ENCODE measurements at regions of chr12 and their contacts with region 1.

Region 1: DNA sequence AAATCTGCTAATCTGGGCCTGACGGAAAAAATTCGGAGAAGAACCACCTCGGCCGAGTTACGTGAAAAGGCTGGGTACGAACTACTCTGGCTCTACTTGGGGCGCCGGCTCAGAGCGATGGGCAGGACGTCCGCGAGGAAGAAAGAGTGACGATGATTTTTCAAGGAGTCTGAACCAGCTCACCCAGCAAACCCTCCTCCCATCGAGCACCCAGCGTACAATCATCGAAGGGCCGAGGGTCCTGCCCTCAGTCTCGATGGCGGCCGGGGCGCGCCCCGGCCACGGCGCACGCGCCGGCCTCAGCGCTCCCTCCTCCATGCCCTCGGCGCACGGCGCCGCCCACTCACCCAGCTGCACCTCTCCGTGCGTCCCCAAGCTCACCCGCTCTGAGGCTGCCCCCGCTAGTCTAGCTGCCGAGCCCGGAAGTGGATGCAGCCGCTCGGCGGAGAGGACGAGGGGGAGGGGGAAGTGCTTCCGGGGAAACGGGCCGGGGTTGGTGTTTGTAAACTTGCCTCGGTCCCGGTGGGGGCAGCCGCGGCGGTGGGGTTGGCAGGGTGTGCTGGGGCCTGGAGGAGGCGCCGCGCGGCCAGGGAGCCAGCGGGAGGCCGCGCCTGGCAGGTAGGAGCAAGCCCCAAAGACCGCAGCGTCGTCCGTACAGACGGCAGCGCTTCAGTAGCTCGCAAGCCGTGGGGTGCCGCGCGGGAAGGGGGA is at the starts of genes CSAD and ZNF740:
- DNase-seq: peak; percentile 91
- ATAC-seq: peak; percentile 94
- H3K4me3 Mint-ChIP-seq: peak within 1 kb of the TSS; percentile 93
- H3K27ac Mint-ChIP-seq: peak within 1 kb of the TSS; percentile 98
- H3K4me1 Mint-ChIP-seq: peaks cover 53% of the 10 kb centered on the region
- H3K27me3 Mint-ChIP-seq: no peaks in the 10 kb centered on the region
- CTCF ChIP-seq: no peak
- total RNA-seq, gene CSAD: 25.7 and 34.6 TPM in 2 replicates
- total RNA-seq, gene ZNF740: 64.4 and 67.2 TPM in 2 replicates

Region 2: DNA sequence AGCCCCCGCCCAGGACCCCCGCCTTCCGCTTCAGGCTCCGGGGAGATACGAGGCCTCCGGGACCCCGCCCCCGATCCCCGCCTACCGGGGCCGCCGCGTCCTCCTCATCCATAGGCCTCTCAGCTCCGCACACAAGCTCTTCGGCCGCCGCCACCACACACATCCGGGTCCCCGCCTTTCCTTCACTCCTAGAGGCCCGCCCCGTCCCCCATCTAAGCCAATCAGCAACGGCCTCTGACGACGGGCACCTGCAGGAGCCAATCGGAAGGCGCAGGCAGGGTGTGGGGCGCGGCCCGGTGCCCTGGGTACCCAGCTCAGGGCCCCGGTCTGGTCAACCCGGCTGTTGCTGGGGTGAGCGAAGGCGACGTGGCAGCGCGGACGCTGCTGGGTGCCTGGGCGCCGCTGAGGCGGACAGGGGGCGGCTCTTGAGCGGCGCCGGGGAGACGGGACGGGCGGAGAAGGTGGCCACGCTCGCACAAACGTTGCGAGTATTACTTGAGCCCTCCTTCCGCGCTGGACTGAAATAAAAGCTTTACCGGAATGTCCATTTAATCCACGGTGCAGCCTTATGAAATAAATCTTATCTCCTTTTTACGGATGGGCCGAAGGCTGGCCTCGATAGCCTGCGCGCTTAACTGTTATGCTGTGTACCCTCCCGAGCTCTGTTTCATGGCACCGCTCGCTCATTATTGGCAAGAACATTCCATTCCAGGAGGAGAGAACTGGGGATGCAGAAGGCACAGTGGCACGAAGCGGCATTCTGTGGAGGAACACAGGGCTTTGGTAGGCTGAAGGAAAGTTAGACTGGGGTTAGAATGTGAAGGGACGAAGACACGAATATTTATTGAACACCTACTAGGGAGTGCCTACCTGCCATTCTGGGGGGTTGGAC is 100.9 kb before region 1 on chr12 and contains the start of gene SPRYD3:
- CTCF ChIA-PET with region 1: no interaction called
- POLR2A ChIA-PET with region 1: interaction called, 28 read pairs
- intact Hi-C with region 1: loop called (anchors 1 kb)
- DNase-seq: peak; percentile 98
- ATAC-seq: peak; percentile 98
- H3K4me3 Mint-ChIP-seq: peak within 1 kb of the TSS; percentile 92
- H3K27ac Mint-ChIP-seq: peak within 1 kb of the TSS; percentile 87
- H3K4me1 Mint-ChIP-seq: peaks cover 31% of the 10 kb centered on the region
- H3K27me3 Mint-ChIP-seq: no peaks in the 10 kb centered on the region
- CTCF ChIP-seq: no peak
- total RNA-seq, gene SPRYD3: 32.5 and 33.9 TPM in 2 replicates

Region 3: DNA sequence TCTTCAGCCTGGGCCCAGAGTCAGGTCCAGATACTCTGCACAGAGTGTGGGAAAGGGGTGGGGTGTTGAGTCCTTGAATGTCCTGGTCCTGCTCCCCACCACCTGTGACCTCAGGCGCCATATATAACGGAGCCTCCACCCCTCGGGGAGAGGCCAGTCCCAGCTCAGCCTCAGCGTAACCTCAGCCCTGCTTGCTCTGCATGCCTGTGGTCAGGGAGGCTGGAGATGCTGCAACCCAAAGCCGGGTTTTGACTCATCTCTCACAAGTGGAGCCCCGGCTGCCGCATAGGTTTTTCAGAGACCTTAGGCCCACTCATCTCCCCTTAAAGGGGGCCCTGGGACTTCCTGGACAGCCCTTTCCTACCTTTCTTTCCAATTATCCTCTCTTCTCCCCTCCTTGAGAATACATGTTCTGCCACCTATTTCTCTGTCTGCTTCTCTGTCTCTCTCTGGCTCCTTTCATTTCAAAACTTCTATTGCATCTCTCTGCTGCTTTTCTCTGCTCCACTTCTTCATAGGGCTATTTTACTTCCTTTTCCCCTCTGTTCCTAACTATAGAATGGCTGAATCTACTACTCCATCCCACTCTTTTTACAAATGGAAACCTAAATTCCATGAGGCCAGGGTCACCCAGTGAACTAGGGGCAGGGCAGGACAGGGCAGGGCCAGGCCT is 25.5 kb after region 1 on chr12:
- CTCF ChIA-PET with region 1: interaction called, 8 read pairs
- POLR2A ChIA-PET with region 1: interaction called, 66 read pairs
- intact Hi-C with region 1: loop called (anchors 1 kb)
- DNase-seq: peak; percentile 50
- ATAC-seq: peak; percentile 66
- H3K4me3 Mint-ChIP-seq: peak overlapping the region; percentile 89
- H3K27ac Mint-ChIP-seq: peak overlapping the region; percentile 83
- H3K4me1 Mint-ChIP-seq: peaks cover 93% of the 10 kb centered on the region
- H3K27me3 Mint-ChIP-seq: no peaks in the 10 kb centered on the region
- CTCF ChIP-seq: no peak

Region 4: GRCh38 chr12:53267999-53268647 is 87.7 kb after region 1 on chr12 and contains the start of gene ESPL1:
- CTCF ChIA-PET with region 1: interaction called, 3 read pairs
- POLR2A ChIA-PET with region 1: interaction called, 33 read pairs
- intact Hi-C with region 1: loop called (anchors 1 kb)
- DNase-seq: peak; percentile 84
- ATAC-seq: peak; percentile 94
- H3K4me3 Mint-ChIP-seq: peak within 1 kb of the TSS; percentile 98
- H3K27ac Mint-ChIP-seq: peak within 1 kb of the TSS; percentile 91
- H3K4me1 Mint-ChIP-seq: peaks cover 21% of the 10 kb centered on the region
- H3K27me3 Mint-ChIP-seq: no peaks in the 10 kb centered on the region
- CTCF ChIP-seq: no peak
- total RNA-seq, gene ESPL1: 6.2 and 8.2 TPM in 2 replicates

Region 5: DNA sequence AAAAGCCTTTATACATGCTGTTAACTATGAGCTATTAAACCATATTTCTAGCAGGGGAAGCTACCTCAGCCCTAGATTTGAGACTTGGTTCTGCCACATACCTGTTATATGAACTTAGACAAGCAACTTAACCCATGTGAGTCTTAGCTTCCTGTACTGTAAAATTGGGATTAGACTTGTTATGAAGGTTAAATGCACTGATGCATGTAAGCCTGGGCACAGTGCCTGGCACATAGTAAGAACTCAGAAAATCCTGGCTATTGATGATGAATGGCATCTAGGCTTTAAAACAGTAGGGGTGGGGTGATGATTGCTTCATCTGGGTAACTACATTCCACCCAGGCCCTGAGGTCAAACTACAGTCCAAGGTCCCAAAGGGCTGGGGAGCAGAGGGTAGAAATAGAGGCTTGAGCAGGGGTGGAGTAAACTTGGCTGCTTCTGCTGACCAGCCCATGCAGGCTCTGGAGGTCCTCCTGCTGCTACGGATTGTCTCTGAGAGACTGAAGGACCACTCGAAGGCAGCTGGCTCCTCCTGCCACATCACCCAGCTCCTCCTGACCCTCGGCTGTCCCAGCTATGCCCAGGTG is 99.0 kb after region 1 on chr12:
- CTCF ChIA-PET with region 1: no interaction called
- POLR2A ChIA-PET with region 1: no interaction called
- intact Hi-C with region 1: no loop called
- DNase-seq: no peak
- ATAC-seq: no peak
- H3K4me3 Mint-ChIP-seq: no peak overlapping the region
- H3K27ac Mint-ChIP-seq: no peak overlapping the region
- H3K4me1 Mint-ChIP-seq: no peaks in the 10 kb centered on the region
- H3K27me3 Mint-ChIP-seq: no peaks in the 10 kb centered on the region
- CTCF ChIP-seq: no peak

Region 6: DNA sequence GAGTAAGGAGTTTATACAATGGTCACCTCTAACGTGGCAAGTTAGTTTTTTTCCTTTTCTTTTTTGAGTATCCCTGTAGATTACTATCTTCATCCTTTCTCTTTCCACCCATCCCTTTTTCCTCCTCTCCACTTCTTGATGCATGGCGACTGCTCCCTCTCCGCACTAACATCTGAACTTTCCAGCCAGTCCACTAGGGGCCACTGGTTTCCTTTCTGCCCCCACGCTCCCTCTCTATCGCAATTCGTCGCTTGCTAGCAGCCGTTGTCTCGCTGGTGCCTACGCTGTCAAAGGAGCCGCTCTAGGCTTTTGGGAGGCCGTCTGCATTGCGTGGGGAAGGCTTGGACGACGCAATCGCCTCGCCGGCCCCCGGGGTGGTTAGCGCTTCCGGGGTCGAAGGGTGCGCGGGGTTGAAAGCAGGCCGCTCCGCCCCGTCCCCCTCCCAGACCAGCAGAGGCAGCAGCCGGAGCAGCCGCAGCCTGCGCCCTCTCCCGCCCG is 271.3 kb after region 1 on chr12 and contains the start of gene PCBP2:
- CTCF ChIA-PET with region 1: no interaction called
- POLR2A ChIA-PET with region 1: no interaction called
- intact Hi-C with region 1: loop called (anchors 2 kb)
- DNase-seq: peak; percentile 92
- ATAC-seq: peak; percentile 92
- H3K4me3 Mint-ChIP-seq: peak within 1 kb of the TSS; percentile 99
- H3K27ac Mint-ChIP-seq: peak within 1 kb of the TSS; percentile 99
- H3K4me1 Mint-ChIP-seq: peaks cover 30% of the 10 kb centered on the region
- H3K27me3 Mint-ChIP-seq: no peaks in the 10 kb centered on the region
- CTCF ChIP-seq: no peak
- total RNA-seq, gene PCBP2: 841 and 853 TPM in 2 replicates

Measured in activated B cell treated with CpG ODN at 0.5 μM for 24 hours (primary cell).